ENCODE measurements at regions of chr3 and their contacts with region 1.

Region 1: GRCh38 chr3:184711493-184712247 is at the start of gene MAGEF1:
- DNase-seq: peak; percentile 81
- H3K4me3 Mint-ChIP-seq: peak within 1 kb of the TSS; percentile 95
- H3K27ac Mint-ChIP-seq: peak within 1 kb of the TSS; percentile 90
- H3K4me1 Mint-ChIP-seq: peaks cover 36% of the 10 kb centered on the region
- H3K27me3 Mint-ChIP-seq: no peaks in the 10 kb centered on the region
- total RNA-seq, gene MAGEF1: 17.4 to 18.1 TPM

Region 2: GRCh38 chr3:184154885-184155643 is 556.6 kb before region 1 on chr3 and contains the start of gene DVL3:
- CTCF ChIA-PET with region 1: no interaction called
- intact Hi-C with region 1: no loop called
- DNase-seq: peak; percentile 25
- H3K4me3 Mint-ChIP-seq: peak within 1 kb of the TSS; percentile 94
- H3K27ac Mint-ChIP-seq: peak within 1 kb of the TSS; percentile 66
- H3K4me1 Mint-ChIP-seq: peaks cover 19% of the 10 kb centered on the region
- H3K27me3 Mint-ChIP-seq: no peaks in the 10 kb centered on the region
- total RNA-seq, gene DVL3: 19.6 to 19.9 TPM

Region 3: GRCh38 chr3:184636741-184637316 is 74.8 kb before region 1 on chr3:
- CTCF ChIA-PET with region 1: no interaction called
- intact Hi-C with region 1: loop called (anchors 1 kb)
- DNase-seq: peak; percentile 74
- H3K4me3 Mint-ChIP-seq: no peak overlapping the region
- H3K27ac Mint-ChIP-seq: no peak overlapping the region
- H3K4me1 Mint-ChIP-seq: no peaks in the 10 kb centered on the region
- H3K27me3 Mint-ChIP-seq: no peaks in the 10 kb centered on the region

Region 4: DNA sequence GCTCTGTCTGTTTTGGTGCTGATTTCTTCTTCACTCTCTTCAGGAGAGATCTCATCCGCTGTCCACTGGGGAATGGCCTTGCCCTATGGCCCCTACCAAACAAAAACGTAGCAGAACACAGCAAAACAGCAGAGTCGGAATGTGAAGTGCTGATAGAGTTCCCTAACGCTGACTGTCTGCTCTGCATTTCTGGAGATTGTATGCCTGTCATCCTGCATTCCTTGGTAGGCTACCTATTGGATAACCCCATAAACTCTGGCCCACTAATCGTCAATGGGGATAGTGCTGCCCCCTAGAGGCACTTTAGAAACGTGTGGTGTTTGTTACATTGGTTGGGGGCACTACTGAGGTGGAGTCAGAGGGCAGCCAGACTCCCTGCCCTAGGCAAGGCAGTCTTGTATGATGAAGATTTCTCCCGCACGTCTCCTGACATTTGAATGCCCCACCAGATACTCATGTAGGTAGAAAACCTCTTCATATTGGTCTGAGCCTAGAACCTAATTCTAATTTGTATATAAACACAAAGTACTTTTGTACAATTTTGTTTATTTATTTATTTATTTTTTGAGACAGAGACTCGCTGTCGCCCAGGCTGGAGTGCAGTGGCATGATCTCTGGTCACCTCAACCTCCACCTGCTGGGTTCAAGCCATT is 15.8 kb after region 1 on chr3:
- CTCF ChIA-PET with region 1: interaction called, 10 read pairs
- intact Hi-C with region 1: no loop called
- DNase-seq: peak; percentile 70
- H3K4me3 Mint-ChIP-seq: no peak overlapping the region
- H3K27ac Mint-ChIP-seq: peak overlapping the region; percentile 2
- H3K4me1 Mint-ChIP-seq: no peaks in the 10 kb centered on the region
- H3K27me3 Mint-ChIP-seq: no peaks in the 10 kb centered on the region